HepG2 (cell line): ENCODE measurements at regions of chr16 and their contacts with region 1.

Region 1: GRCh38 chr16:57383276-57384247 is 11.3 kb downstream of the CX3CL1 start:
- DNase-seq: peak; percentile 44
- ATAC-seq: peak; percentile 45
- H3K4me3 ChIP-seq: no peak overlapping the region
- H3K27ac ChIP-seq: peak overlapping the region; percentile 3
- H3K4me1 ChIP-seq: peaks cover 61% of the 10 kb centered on the region
- H3K27me3 ChIP-seq: no peaks in the 10 kb centered on the region
- CTCF ChIP-seq: no peak
- EP300 ChIP-seq: peak in 1 of 2 experiments; percentile 20; a peak in 1 of 4 replicates
- POLR2A ChIP-seq: peak; percentile 34 to 45; a peak in 3 of 4 replicates
- RAD21 ChIP-seq: 0 out of 2 replicates have a peak, but pooled peaks have one; percentile 10

Region 2: DNA sequence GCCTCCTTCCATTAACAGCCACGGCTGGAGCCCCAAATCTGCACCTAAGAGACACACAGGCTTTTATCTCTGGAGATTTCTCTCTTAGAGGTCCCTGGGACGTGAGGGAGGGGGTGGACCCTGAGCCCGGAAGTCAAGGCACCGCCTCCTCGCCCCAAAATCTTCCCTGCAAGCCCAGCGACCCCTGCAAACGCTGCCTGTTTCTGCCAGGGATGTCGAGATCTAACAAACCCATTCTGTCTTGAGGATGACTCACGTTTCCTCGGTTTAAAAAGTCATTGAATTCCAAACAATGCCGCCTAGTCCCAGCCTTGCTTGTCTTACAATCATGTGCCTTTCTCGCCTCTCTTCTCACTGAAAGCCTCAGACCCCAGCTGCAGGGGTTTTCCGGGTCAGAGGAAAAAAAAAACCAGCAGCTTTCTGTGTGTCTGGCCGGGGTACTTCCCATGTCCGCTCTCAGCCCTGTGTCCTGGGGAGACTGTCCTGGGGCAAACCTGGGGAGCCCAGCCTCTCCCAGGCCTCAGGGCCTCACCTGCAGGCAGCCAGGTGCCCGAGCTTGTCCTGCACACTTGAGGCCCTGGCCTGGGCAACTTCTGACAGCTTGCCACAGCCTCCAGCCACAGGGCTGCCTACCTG is 123.2 kb before region 1 on chr16:
- CTCF ChIA-PET with region 1: no interaction called
- POLR2A ChIA-PET with region 1: no interaction called
- in situ Hi-C with region 1: no loop called
- intact Hi-C with region 1: no loop called
- DNase-seq: no peak
- ATAC-seq: no peak
- H3K4me3 ChIP-seq: no peak overlapping the region
- H3K27ac ChIP-seq: peak overlapping the region; percentile 19
- H3K4me1 ChIP-seq: no peaks in the 10 kb centered on the region
- H3K27me3 ChIP-seq: no peaks in the 10 kb centered on the region
- CTCF ChIP-seq: no peak
- EP300 ChIP-seq: no peak
- POLR2A ChIP-seq: no peak
- RAD21 ChIP-seq: no peak

Region 3: DNA sequence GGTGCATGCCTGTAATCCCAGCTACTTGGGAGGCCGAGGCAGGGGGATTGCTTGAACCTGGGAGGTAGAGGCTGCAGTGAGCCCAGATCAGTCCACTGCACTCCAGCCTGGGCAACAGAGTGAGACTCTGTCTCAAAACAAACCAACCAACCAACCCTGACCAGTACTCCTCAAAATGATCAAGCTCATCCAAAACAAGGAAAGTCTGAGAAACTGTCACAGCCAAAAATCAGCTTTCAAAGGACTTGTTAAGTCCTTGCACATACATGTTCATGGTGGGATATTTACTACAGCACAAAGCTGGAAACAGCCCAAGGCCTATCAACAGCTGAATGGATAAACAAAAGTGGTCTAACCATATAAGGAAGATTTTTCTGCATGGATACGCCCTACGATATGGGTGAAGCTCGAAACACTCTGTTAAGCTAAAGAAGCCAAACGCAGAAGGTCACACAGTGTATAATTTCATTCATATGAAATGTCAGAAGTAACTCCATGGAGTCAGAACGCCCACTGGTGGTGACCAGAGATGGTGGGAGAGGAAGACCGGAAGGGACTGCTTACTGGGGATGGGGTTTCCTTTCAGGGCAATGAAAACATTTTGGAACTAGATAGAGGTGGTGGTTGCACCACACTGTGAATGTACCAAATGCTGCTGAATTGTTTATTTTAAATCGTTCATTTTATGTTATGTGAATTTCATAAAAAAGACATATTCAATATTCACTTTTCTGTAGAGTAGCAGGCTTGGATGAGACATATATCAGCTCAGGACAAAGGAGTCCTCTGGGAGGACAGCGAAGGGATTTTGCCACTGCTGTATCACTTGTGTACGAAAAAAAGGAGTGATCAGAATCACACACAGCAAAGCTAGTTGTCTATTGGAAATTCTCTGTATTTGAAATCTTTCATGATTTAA is 38.7 kb after region 1 on chr16:
- CTCF ChIA-PET with region 1: no interaction called
- POLR2A ChIA-PET with region 1: interaction called, 15 read pairs
- in situ Hi-C with region 1: no loop called
- intact Hi-C with region 1: no loop called
- DNase-seq: peak; percentile 77
- ATAC-seq: peak; percentile 74
- H3K4me3 ChIP-seq: no peak overlapping the region; a peak in 1 of 6 replicates
- H3K27ac ChIP-seq: no peak overlapping the region
- H3K4me1 ChIP-seq: peaks cover 32% of the 10 kb centered on the region
- H3K27me3 ChIP-seq: no peaks in the 10 kb centered on the region
- CTCF ChIP-seq: peak; percentile 91
- EP300 ChIP-seq: no peak
- POLR2A ChIP-seq: no peak
- RAD21 ChIP-seq: peak; percentile 72